IMR-90 (cell line): ENCODE measurements at regions of chr11 and their contacts with region 1.

Region 1: GRCh38 chr11:108222686-108223448 is at the start of gene ATM:
- DNase-seq: peak; percentile 99
- ATAC-seq: peak; percentile 95
- H3K4me3 ChIP-seq: peak within 1 kb of the TSS; percentile 73
- H3K27ac ChIP-seq: peak within 1 kb of the TSS; percentile 95
- H3K4me1 ChIP-seq: peaks cover 4% of the 10 kb centered on the region; the same call in 1 of the 2 replicates
- H3K27me3 ChIP-seq: no peaks in the 10 kb centered on the region
- CTCF ChIP-seq: peak; percentile 93
- POLR2A ChIP-seq: peak; percentile 65; the same call in 1 of the 2 replicates
- RAD21 ChIP-seq: peak; percentile 65
- total RNA-seq, gene ATM: 30.6 and 54.4 TPM in 2 replicates

Region 2: DNA sequence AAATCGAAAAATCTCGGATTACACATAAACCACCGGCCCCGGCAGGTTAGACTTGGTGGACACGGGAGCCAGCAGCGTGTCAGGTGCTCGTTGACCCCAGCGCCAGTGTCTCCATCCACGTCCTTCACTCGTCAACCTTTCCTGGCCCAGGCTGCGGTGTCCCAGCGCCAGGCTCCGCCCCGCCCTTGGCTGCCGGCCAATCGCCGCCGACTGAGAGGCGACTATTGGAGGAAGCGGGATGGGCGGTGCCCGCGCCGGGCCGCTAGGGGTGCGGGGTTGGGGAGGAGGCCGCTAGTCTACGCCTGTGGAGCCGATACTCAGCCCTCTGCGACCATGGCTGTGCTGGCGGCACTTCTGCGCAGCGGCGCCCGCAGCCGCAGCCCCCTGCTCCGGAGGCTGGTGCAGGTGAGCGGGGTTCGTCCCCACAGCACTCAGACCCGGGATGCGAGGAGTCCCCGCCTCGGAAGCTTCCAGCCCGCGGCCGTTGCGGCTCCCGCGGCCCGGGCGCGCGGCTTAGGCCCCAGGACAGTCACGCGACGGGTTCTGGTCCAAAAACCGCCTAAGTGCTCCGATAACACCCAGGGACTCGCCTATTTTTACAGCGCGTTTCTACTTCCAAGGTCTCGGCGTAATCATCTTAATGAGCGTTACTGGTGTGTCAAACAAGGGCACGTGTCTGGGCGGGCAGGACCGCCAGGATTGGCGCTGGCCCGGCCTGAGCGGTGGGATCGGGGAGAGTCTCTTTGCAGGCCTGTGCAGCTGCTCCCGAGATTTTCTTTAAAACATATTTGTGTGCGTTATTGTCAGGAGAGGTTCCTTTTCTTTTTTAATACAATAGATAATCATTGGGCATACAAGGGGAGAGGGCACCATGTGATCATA is 101.4 kb before region 1 on chr11 and contains the start of gene ACAT1:
- CTCF ChIA-PET with region 1: interaction called, 3 read pairs
- POLR2A ChIA-PET with region 1: no interaction called
- dilution Hi-C with region 1: no loop called
- in situ Hi-C with region 1: no loop called
- intact Hi-C with region 1: loop called (anchors 5 kb)
- DNase-seq: peak; percentile 82
- ATAC-seq: peak; percentile 98
- H3K4me3 ChIP-seq: peak within 1 kb of the TSS; percentile 86
- H3K27ac ChIP-seq: peak within 1 kb of the TSS; percentile 70
- H3K4me1 ChIP-seq: peaks cover 3% of the 10 kb centered on the region
- H3K27me3 ChIP-seq: no peaks in the 10 kb centered on the region
- CTCF ChIP-seq: peak; percentile 18; the same call in 1 of the 2 replicates
- POLR2A ChIP-seq: peak; percentile 83
- RAD21 ChIP-seq: no peak
- total RNA-seq, gene ACAT1: 57.7 and 87.2 TPM in 2 replicates

Region 3: DNA sequence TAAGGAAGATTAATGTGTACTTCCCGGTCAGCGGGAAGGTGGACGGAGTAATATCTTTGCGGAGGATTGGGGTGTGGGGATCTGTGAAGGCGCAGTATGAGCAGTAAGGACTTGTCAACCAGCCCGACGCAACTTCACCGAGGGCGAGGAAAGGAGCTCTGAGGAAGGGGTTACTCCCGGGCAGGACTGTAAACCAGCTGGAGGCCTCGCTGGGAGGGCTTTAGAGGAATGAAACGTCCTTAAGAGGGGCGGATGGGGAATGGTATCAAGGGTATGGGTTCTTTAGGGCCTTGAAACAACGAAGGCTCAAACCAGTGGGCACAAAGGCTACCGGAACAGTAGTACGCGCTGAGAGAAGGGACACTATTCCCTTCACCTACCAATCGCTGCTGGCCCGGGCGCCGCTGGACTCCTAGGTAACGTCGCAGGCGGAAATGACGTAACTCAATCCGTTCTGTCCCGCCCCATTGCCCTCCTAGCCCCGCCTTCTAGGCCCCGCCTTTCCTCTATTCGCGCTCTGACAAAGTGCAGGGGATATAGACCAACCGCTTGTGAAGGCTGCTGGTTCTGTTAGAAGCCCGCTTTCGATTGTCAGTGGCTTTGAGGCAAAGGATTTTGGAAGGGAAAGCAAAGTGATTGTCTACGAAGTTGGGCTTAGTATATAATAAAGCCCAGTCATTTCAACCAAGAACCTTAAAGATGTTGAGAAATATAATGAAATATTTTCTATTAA is 244.4 kb after region 1 on chr11 and contains the start of gene C11orf65:
- CTCF ChIA-PET with region 1: no interaction called
- POLR2A ChIA-PET with region 1: no interaction called
- dilution Hi-C with region 1: no loop called
- in situ Hi-C with region 1: no loop called
- intact Hi-C with region 1: loop called (anchors 10 kb)
- DNase-seq: peak; percentile 96
- ATAC-seq: peak; percentile 99
- H3K4me3 ChIP-seq: peak within 1 kb of the TSS; percentile 83
- H3K27ac ChIP-seq: peak within 1 kb of the TSS; percentile 95
- H3K4me1 ChIP-seq: peaks cover 2% of the 10 kb centered on the region; the same call in 1 of the 2 replicates
- H3K27me3 ChIP-seq: no peaks in the 10 kb centered on the region
- CTCF ChIP-seq: no peak
- POLR2A ChIP-seq: peak; percentile 95
- RAD21 ChIP-seq: no peak; the same call in none of the 2 replicates
- total RNA-seq, gene C11orf65: 0.18 and 0.56 TPM in 2 replicates

Region 4: DNA sequence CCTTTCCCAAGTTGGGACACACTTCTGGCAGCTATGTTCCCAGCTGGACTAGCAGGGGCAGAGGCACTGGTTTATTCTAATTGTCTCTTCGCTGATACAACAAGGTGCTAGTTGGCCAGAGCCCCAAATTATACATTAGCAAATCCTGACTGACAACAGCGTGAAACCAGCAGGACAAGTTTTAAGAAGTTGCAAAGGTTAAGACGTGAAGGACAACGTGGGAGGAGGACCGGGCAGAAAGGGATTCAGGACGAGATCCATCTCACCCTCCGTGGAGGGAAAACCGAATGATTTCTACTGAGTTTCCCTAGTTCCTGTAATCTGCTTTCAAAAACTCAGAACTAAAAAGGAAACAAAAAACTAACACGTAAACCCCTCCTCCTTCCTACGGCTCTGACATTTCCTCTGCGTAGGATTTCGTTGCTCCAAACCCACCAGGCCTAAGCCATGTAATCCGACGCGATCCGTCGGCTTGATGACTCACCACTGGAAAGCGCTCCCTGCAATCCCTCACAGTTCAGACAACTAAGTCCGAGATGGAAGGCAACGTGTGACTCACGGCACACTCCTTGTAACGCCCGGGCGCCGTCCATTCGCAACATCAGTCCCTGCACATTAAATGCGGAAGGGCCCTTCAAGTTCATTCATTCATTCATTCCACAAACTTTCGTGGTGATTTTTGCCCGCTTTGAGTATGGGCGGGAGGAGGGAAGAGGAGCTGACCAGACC is 274.6 kb after region 1 on chr11:
- CTCF ChIA-PET with region 1: no interaction called
- POLR2A ChIA-PET with region 1: no interaction called
- dilution Hi-C with region 1: no loop called
- in situ Hi-C with region 1: no loop called
- intact Hi-C with region 1: loop called (anchors 2 kb)
- DNase-seq: peak; percentile 100
- ATAC-seq: peak; percentile 89
- H3K4me3 ChIP-seq: peak overlapping the region; percentile 54
- H3K27ac ChIP-seq: peak overlapping the region; percentile 89
- H3K4me1 ChIP-seq: peaks cover 3% of the 10 kb centered on the region
- H3K27me3 ChIP-seq: no peaks in the 10 kb centered on the region
- CTCF ChIP-seq: no peak
- POLR2A ChIP-seq: peak; percentile 71
- RAD21 ChIP-seq: no peak

Region 5: DNA sequence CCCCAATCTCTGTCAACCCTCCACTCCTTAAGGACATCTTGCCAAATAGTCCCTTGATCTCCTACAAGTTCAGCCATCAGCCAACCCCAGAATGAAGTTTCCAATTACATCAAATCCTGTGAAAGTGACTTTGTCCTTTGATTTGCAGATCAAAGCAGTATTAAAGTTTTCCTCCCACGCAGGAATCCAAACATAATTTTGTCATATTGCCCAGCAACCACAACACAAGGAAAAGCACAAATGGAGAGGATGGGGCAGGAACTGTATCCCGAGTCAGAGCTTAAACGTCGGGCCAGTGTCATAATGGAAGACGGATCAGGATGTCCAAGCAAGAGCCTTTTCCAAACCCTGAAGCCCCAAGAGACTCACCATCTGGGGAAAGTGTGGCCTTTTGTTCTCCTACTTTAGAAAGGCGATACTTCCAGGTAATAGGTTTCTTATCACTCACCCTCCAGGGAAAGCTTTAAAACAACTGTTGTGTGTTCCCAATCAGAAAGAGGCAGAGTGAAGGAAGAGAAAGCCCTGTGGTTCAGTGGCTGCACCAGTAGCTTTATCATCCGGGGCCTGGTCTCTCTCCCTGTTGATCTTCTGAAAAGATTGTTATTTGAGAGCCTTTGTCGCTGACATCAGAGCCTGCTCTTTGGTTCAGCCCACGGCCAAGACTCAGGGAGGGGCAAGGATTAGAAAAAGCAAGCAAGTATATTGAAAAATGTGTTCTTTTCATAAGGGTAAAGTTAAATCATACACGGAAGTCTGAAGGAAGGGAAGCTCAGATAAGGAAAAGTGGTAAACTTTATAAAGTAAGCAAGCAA is 329.0 kb after region 1 on chr11:
- CTCF ChIA-PET with region 1: no interaction called
- POLR2A ChIA-PET with region 1: no interaction called
- dilution Hi-C with region 1: no loop called
- in situ Hi-C with region 1: no loop called
- intact Hi-C with region 1: no loop called
- DNase-seq: peak; percentile 46
- ATAC-seq: peak; percentile 88
- H3K4me3 ChIP-seq: no peak overlapping the region; the same call in 1 of the 2 replicates
- H3K27ac ChIP-seq: peak overlapping the region; percentile 28; the same call in 1 of the 2 replicates
- H3K4me1 ChIP-seq: peaks cover 8% of the 10 kb centered on the region
- H3K27me3 ChIP-seq: no peaks in the 10 kb centered on the region
- CTCF ChIP-seq: no peak
- POLR2A ChIP-seq: no peak
- RAD21 ChIP-seq: no peak